Heart right ventricle (tissue), 16 donors: ENCODE measurements at regions of chr18 and their contacts with region 1.

Region 1: GRCh38 chr18:39425172-39425850 is 1859.7 kb upstream of the CELF4 start:
- DNase-seq: no peak
- ATAC-seq: no peak
- H3K4me3 ChIP-seq: no peak overlapping the region
- H3K27ac ChIP-seq: no peak overlapping the region
- H3K4me1 ChIP-seq: no peaks in the 10 kb centered on the region
- H3K27me3 ChIP-seq: no peaks in the 10 kb centered on the region
- CTCF ChIP-seq: no peak

Region 2: GRCh38 chr18:37742436-37742835 is 1682.9 kb before region 1 on chr18:
- intact Hi-C with region 1: loop called in 1 of 10 experiments (anchors 5 kb)
- DNase-seq: no peak
- ATAC-seq: no peak
- H3K4me3 ChIP-seq: no peak overlapping the region
- H3K27ac ChIP-seq: no peak overlapping the region
- H3K4me1 ChIP-seq: no peaks in the 10 kb centered on the region
- H3K27me3 ChIP-seq: peaks cover 0 to 3% (median 0%) of the 10 kb centered on the region in 7 donors
- CTCF ChIP-seq: no peak

Region 3: GRCh38 chr18:39259736-39260135 is 165.6 kb before region 1 on chr18:
- intact Hi-C with region 1: no loop called
- DNase-seq: no peak
- ATAC-seq: no peak
- H3K4me3 ChIP-seq: no peak overlapping the region
- H3K27ac ChIP-seq: no peak overlapping the region
- H3K4me1 ChIP-seq: no peaks in the 10 kb centered on the region
- H3K27me3 ChIP-seq: no peaks in the 10 kb centered on the region
- CTCF ChIP-seq: no peak

Region 4: GRCh38 chr18:39389800-39390379 is 35.4 kb before region 1 on chr18:
- intact Hi-C with region 1: no loop called
- DNase-seq: no peak
- ATAC-seq: no peak
- H3K4me3 ChIP-seq: no peak overlapping the region
- H3K27ac ChIP-seq: no peak overlapping the region
- H3K4me1 ChIP-seq: no peaks in the 10 kb centered on the region
- H3K27me3 ChIP-seq: no peaks in the 10 kb centered on the region
- CTCF ChIP-seq: no peak